ENCODE measurements at regions of chr1 and their contacts with region 1.

Region 1: DNA sequence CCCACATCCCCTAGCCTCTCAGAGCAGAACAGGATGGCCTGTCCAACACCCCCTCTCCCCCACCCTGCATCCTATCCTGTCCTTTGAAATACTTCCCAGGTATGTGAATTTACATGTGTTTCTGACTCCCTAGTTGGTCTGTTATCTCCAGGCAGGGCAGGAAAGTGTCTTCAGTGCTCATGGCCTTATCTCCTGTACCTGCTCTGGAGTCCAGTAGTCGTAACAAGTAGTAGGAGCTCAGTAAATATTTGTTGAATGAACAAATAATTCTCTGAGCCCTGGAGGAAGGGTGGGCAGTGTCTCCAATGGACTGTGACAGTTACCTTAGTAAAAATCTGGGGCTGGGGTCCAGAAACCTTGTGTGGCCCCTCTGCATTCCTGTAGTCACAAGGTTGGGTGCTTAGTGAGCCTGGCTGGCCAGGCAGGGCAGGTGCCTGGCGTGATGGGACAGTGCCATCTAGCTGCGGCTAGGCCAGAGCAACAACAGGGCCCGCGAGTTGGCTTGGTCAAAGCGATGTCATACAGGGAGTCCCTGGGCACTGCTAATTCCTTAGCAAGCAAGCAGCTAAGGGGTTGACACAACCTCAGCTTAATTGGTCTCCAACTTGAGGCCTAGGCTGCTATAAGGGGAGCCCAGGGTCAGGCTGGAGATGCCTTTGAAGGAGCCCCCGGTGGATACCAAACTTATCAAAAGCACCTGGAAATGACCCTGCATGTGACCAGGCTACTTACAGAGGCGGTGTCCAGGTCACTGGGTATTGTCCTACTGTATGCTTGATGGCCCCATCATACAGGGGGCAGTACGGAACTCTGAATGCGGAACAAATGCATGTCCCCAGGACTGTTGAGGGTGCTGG is 89.0 kb upstream of the PPM1J start:
- DNase-seq: peak; percentile 29
- H3K4me3 Mint-ChIP-seq: no peak overlapping the region
- H3K27ac Mint-ChIP-seq: no peak overlapping the region
- H3K4me1 Mint-ChIP-seq: no peaks in the 10 kb centered on the region
- H3K27me3 Mint-ChIP-seq: peaks cover 5% of the 10 kb centered on the region

Region 2: DNA sequence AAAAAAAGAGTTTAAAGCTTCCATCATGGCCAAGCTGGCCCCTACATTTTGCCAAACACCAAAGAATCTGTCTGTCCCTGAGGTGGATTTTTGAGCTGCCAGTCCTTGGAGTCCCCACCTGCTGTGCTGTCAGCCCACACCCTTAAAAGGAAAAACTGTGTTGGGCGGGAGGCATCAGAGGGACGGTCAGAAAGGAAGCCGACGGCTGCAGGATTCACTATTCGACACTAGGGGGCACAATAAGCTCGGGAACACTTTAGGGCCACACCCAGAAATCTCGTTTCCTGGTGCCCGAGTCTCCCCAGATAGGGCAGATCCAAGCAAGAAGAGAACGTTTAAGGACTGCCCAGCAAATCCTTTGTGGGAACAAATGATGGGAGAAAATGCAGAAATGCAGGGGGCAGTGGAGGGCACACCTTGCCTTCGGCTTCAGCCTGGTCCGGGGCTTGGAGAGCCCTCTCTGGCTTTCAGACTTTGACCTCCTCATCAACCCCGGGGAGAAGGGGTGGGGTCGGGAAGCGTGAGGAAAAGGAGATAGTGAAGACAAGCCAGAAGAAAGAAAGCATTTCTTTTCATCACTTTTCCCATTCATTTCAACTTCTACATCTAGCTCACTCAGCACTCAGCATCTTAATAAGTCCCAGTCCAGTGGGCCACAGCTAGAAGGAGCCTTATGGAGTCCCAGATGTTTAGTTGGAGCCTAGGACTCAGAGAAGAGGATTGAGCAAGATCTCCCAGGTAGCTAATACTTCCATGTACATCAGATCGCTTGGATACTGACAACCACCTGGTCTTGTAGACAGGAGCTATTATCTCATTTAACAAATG is 413.1 kb before region 1 on chr1:
- intact Hi-C with region 1: loop called (anchors 1 kb)
- DNase-seq: peak; percentile 75
- H3K4me3 Mint-ChIP-seq: peak overlapping the region; percentile 70
- H3K27ac Mint-ChIP-seq: peak overlapping the region; percentile 15
- H3K4me1 Mint-ChIP-seq: peaks cover 37% of the 10 kb centered on the region
- H3K27me3 Mint-ChIP-seq: peaks cover 1% of the 10 kb centered on the region

Region 3: GRCh38 chr1:112833806-112834205 is 29.7 kb after region 1 on chr1:
- intact Hi-C with region 1: no loop called
- DNase-seq: no peak
- H3K4me3 Mint-ChIP-seq: no peak overlapping the region
- H3K27ac Mint-ChIP-seq: no peak overlapping the region
- H3K4me1 Mint-ChIP-seq: no peaks in the 10 kb centered on the region
- H3K27me3 Mint-ChIP-seq: peaks cover 13% of the 10 kb centered on the region

Region 4: DNA sequence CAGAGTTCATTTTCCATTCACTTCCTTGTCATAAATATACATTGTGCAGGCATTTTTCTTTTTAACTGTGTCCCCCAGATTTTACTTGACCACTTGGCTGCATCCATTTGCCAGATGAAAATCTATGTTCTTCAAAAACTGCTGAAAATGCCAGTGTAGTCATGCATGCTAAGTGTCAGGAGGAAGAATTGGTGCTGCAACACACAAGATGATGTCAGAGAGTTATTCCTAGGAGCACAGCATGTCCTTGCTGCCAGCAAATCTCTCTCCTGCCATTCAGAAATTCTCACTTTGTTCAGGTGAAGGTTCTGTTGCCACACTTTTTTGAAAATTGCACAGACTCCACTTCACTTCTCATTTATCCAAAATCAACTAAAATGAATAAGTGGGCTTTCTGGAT is 479.8 kb after region 1 on chr1:
- intact Hi-C with region 1: no loop called
- DNase-seq: no peak
- H3K4me3 Mint-ChIP-seq: no peak overlapping the region
- H3K27ac Mint-ChIP-seq: no peak overlapping the region
- H3K4me1 Mint-ChIP-seq: no peaks in the 10 kb centered on the region
- H3K27me3 Mint-ChIP-seq: peaks cover 9% of the 10 kb centered on the region